OCI-LY7 (cell line): ENCODE measurements at regions of chr22 and their contacts with region 1.

Region 1: DNA sequence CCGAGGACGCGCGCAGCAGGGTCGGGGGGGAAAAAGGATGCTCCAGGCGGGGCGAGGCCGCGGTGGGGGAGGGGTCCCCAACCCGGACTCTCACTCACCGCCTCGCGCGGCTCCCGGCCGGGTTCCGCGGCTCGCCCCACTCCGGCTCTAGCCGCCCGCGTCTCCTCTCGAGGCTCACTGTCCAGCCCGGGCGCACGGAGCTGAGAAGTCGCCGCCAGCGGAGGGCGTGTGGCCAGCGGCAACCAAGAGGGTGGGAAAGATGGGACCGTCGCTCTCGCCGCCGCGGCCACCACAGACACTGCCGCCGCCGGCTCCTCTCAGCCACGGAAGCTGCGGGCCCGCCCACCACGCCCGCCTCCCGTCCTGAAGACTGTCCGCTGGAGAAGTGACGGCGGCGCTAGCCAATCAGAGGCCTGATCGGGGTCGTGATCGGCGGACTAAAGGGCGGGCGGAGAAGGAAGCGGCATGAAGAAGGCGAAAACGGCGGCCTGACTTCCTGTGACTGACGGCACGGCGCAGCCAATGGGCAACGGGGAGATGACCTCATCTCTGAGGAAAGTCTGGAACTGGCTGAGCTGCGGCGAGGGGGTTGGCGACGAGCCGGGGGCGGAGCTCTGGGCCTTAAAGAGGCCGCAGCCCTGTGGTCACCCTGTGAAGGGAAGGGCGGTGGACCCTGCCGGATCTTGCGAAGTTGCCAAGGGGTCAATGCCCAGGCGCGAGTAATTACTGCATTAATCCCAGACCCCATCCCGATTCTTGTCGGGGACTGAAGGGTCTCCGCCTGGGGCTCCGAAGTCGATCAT is at the start of gene MRTFA:
- DNase-seq: peak; percentile 99
- H3K4me3 ChIP-seq: peak within 1 kb of the TSS; percentile 83
- H3K27ac ChIP-seq: peak within 1 kb of the TSS; percentile 35
- H3K4me1 ChIP-seq: peaks cover 21% of the 10 kb centered on the region
- CTCF ChIP-seq: no peak
- total RNA-seq, gene MRTFA: 25.6 and 47.7 TPM in 2 replicates

Region 2: GRCh38 chr22:40376149-40376548 is 260.4 kb before region 1 on chr22:
- CTCF ChIA-PET with region 1: no interaction called
- POLR2A ChIA-PET with region 1: no interaction called
- intact Hi-C with region 1: loop called (anchors 10 kb)
- DNase-seq: peak; percentile 90
- H3K4me3 ChIP-seq: peak overlapping the region; percentile 58
- H3K27ac ChIP-seq: peak overlapping the region; percentile 97
- H3K4me1 ChIP-seq: peaks cover 71% of the 10 kb centered on the region
- CTCF ChIP-seq: no peak

Region 3: GRCh38 chr22:40418366-40419201 is 218.0 kb before region 1 on chr22:
- CTCF ChIA-PET with region 1: no interaction called
- POLR2A ChIA-PET with region 1: no interaction called
- intact Hi-C with region 1: loop called (anchors 2 kb)
- DNase-seq: peak; percentile 86
- H3K4me3 ChIP-seq: peak overlapping the region; percentile 14
- H3K27ac ChIP-seq: peak overlapping the region; percentile 98
- H3K4me1 ChIP-seq: peaks cover 79% of the 10 kb centered on the region
- CTCF ChIP-seq: no peak

Region 4: GRCh38 chr22:40525249-40525884 is 111.2 kb before region 1 on chr22:
- CTCF ChIA-PET with region 1: no interaction called
- POLR2A ChIA-PET with region 1: no interaction called
- intact Hi-C with region 1: loop called (anchors 2 kb)
- DNase-seq: peak; percentile 72
- H3K4me3 ChIP-seq: no peak overlapping the region
- H3K27ac ChIP-seq: no peak overlapping the region
- H3K4me1 ChIP-seq: peaks cover 16% of the 10 kb centered on the region
- CTCF ChIP-seq: peak; percentile 98

Region 5: GRCh38 chr22:40593460-40594273 is 42.9 kb before region 1 on chr22:
- CTCF ChIA-PET with region 1: no interaction called
- POLR2A ChIA-PET with region 1: interaction called, 3 read pairs
- intact Hi-C with region 1: loop called (anchors 5 kb)
- DNase-seq: peak; percentile 73
- H3K4me3 ChIP-seq: peak overlapping the region; percentile 54
- H3K27ac ChIP-seq: peak overlapping the region; percentile 78
- H3K4me1 ChIP-seq: peaks cover 67% of the 10 kb centered on the region
- CTCF ChIP-seq: no peak; the same call in 1 of the 2 replicates